ENCODE measurements at regions of chr5 and their contacts with region 1.

Region 1: DNA sequence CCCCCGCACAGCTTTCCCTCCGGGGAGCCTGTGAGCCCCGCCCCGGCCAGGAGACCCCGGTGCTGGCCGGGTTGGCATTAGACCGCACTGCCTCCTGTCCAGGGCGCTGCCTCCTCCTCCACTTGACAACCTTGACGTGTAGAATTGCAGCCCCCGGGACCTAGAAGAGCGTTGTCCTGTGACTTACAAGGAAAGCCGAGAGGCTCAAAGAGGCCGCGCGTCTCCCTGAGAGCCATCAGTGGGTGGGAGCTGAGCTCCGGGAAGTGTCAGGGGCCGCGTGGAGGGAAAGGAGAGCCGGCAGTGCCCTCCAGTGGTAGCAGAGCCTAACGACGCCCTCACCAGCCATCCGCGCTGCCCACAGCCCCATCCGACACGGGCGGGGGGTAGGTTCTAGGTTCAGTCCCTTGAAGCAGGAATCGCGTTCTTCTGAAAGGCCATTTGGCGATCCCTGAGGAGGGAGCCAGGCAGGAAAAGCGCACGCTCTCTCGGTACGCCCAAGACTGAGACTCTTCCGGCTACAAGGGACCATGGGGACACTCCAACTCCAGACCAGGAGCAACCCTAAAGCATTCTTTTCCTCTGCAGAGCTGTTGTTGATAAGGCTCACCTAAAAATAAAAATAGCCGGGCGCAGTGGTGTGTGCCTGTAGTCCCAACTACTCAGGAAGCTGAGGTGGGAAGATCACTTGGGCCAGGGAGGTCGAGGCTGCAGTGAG is 40.6 kb upstream of the SAP30L start:
- DNase-seq: no peak
- H3K4me3 ChIP-seq: peak overlapping the region; percentile 42 to 54 (median 46)
- H3K27ac ChIP-seq: no peak overlapping the region
- H3K4me1 ChIP-seq: peaks cover 11 to 15% (median 12%) of the 10 kb centered on the region in 4 donors
- H3K27me3 ChIP-seq: no peaks in the 10 kb centered on the region
- CTCF ChIP-seq: peak; percentile 81 to 95 (median 88)
- EP300 ChIP-seq: no peak
- POLR2A ChIP-seq: no peak

Region 2: GRCh38 chr5:153974131-153974812 is 431.0 kb before region 1 on chr5:
- intact Hi-C with region 1: loop called (anchors 10 kb)
- DNase-seq: peak; percentile 75
- H3K4me3 ChIP-seq: no peak overlapping the region
- H3K27ac ChIP-seq: no peak overlapping the region
- H3K4me1 ChIP-seq: no peaks in the 10 kb centered on the region
- H3K27me3 ChIP-seq: peaks cover 0 to 15% (median 0%) of the 10 kb centered on the region in 4 donors
- CTCF ChIP-seq: peak; percentile 51 to 67 (median 53)
- EP300 ChIP-seq: no peak
- POLR2A ChIP-seq: no peak

Region 3: GRCh38 chr5:154072414-154073171 is 332.6 kb before region 1 on chr5:
- intact Hi-C with region 1: loop called (anchors 2 kb)
- DNase-seq: peak; percentile 94
- H3K4me3 ChIP-seq: no peak overlapping the region
- H3K27ac ChIP-seq: no peak overlapping the region
- H3K4me1 ChIP-seq: peaks cover 10 to 15% (median 12%) of the 10 kb centered on the region in 4 donors
- H3K27me3 ChIP-seq: no peaks in the 10 kb centered on the region
- CTCF ChIP-seq: peak; percentile 89 to 94 (median 93)
- EP300 ChIP-seq: no peak
- POLR2A ChIP-seq: no peak

Region 4: GRCh38 chr5:154179846-154180710 is 225.2 kb before region 1 on chr5:
- intact Hi-C with region 1: loop called (anchors 5 kb)
- DNase-seq: no peak
- H3K4me3 ChIP-seq: no peak overlapping the region
- H3K27ac ChIP-seq: no peak overlapping the region
- H3K4me1 ChIP-seq: peaks cover 0 to 17% (median 3%) of the 10 kb centered on the region in 4 donors
- H3K27me3 ChIP-seq: no peaks in the 10 kb centered on the region
- CTCF ChIP-seq: peak; percentile 71 to 85 (median 73)
- EP300 ChIP-seq: no peak
- POLR2A ChIP-seq: no peak